Calu3 (cell line): ENCODE measurements at regions of chr15 and their contacts with region 1.

Region 1: DNA sequence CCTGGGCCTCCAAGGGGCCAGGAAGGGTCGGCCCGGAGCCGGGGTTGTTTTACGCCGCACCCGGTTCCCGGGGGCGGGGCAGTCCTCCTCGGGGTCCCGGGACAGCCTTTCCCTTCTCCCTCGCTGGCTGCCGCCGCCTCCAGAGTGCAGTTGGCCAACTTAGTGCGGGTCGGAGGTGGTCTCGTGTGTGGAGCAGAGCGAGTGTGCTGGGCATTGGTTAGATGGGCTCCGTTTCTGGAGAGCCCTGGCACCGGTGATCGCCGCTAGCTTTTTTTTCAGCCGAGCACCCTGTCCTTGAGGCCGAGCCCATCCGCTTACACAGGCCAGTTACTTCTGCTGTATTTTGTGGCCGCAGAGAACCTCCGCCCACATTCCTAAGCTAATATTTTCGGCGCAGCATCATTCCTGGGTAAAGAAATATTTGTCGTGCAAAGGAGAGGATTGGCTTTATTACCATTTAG is 582 bp downstream of the KIF23 start:
- DNase-seq: peak; percentile 72
- H3K4me3 Mint-ChIP-seq: peak overlapping the region; percentile 80
- H3K27ac Mint-ChIP-seq: peak overlapping the region; percentile 69
- H3K4me1 Mint-ChIP-seq: peaks cover 16% of the 10 kb centered on the region
- H3K27me3 Mint-ChIP-seq: no peaks in the 10 kb centered on the region
- CTCF ChIP-seq: no peak

Region 2: DNA sequence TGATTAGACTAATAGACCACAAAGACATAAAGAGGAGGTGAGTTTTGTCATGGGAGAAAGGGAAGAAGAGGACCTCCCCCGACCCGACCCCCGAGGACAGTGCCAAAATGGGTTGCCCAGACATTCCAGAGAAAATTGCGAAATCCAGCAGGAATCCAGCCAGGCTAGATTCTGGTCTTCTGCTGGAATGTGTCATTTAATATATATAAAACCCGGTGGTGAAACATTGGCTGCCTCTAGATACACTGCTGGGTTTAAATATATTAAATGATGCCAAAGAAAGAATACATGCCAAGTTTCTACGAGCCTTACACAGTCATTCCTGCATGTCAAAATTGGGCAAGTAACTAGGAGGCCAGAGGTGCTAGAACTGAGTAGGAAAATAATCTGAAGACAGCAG is 529.7 kb before region 1 on chr15:
- CTCF ChIA-PET with region 1: no interaction called
- intact Hi-C with region 1: no loop called
- DNase-seq: peak; percentile 37
- H3K4me3 Mint-ChIP-seq: no peak overlapping the region
- H3K27ac Mint-ChIP-seq: no peak overlapping the region
- H3K4me1 Mint-ChIP-seq: no peaks in the 10 kb centered on the region
- H3K27me3 Mint-ChIP-seq: peaks cover under 1% of the 10 kb centered on the region
- CTCF ChIP-seq: no peak

Region 3: DNA sequence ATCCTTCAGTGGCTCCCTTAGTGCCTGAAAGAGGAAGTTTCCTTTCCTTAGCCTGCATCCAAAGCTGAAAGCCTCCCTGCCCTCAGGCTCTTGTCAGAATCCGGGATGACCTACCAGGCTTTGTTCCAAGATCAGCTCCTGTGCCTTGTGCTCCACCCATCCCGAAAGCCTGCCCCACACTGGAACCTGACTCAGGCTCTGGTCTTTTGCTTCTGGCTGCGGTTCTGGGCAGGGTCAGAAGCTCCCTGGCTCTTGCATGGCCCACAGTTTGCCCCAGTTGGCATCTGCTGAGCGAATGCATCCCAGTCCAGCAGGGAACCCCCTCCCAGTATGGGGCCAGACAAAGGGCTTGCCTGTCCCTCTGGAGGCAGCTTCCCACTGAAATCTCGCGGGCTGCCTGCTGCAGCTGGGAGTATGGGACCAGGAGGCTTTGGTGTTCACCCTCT is 26.4 kb before region 1 on chr15:
- CTCF ChIA-PET with region 1: no interaction called
- intact Hi-C with region 1: no loop called
- DNase-seq: no peak
- H3K4me3 Mint-ChIP-seq: no peak overlapping the region
- H3K27ac Mint-ChIP-seq: no peak overlapping the region
- H3K4me1 Mint-ChIP-seq: peaks cover 18% of the 10 kb centered on the region
- H3K27me3 Mint-ChIP-seq: no peaks in the 10 kb centered on the region
- CTCF ChIP-seq: no peak

Region 4: DNA sequence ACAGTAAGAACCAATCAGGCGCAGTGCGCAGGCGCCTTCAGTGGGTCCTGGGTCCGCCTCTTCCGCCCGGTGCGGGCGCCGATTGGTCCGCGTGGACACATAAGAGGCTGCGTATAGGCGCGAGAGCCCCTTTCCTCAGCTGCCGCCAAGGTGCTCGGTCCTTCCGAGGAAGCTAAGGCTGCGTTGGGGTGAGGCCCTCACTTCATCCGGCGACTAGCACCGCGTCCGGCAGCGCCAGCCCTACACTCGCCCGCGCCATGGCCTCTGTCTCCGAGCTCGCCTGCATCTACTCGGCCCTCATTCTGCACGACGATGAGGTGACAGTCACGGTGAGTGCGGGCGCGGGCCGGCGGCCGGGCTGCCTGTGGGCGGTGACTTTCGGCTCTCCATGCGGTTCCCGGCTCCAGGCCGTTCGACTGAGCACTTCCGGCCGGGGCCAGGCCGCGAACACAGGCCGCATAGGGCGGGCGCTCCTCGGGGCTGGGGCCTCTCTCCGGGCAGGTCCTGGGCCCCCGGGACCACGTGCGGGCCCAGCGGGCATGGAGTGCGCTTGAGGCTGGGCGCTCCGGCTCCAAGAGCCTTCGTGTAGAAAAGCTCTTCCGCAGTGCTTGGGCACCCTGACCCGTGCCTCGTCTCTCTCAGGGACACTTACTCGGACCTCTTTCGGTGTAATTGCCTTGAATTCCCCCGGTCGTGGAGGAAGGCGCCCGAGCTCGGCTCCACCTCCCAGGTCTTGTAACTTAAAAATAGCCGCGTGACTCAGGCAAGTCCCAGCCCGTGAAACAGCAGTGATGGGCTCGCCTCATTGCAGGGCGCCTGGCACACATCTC is 38.2 kb after region 1 on chr15 and contains the start of gene RPLP1:
- CTCF ChIA-PET with region 1: interaction called, 4 read pairs
- intact Hi-C with region 1: loop called (anchors 5 kb)
- DNase-seq: peak; percentile 96
- H3K4me3 Mint-ChIP-seq: peak within 1 kb of the TSS; percentile 72
- H3K27ac Mint-ChIP-seq: peak within 1 kb of the TSS; percentile 66
- H3K4me1 Mint-ChIP-seq: peaks cover 13% of the 10 kb centered on the region
- H3K27me3 Mint-ChIP-seq: no peaks in the 10 kb centered on the region
- CTCF ChIP-seq: no peak
- total RNA-seq, gene RPLP1: 1,386 and 1,535 TPM in 2 replicates